Ovary (tissue), 10 donors: ENCODE measurements at regions of chr15 and their contacts with region 1.

Region 1: GRCh38 chr15:68442041-68442440 is 10.1 kb upstream of the ITGA11 start:
- DNase-seq: peak in 2 of 5 donors; percentile 36 to 52
- H3K4me3 ChIP-seq: no peak overlapping the region
- H3K27ac ChIP-seq: no peak overlapping the region
- H3K4me1 ChIP-seq: peaks cover 6% of the 10 kb centered on the region
- H3K27me3 ChIP-seq: no peaks in the 10 kb centered on the region
- CTCF ChIP-seq: no peak
- EP300 ChIP-seq: no peak
- POLR2A ChIP-seq: no peak

Region 2: GRCh38 chr15:68126396-68126795 is 315.6 kb before region 1 on chr15:
- intact Hi-C with region 1: no loop called
- DNase-seq: peak in 2 of 5 donors; percentile 42 to 49
- H3K4me3 ChIP-seq: no peak overlapping the region
- H3K27ac ChIP-seq: no peak overlapping the region
- H3K4me1 ChIP-seq: peaks cover 4% of the 10 kb centered on the region
- H3K27me3 ChIP-seq: no peaks in the 10 kb centered on the region
- CTCF ChIP-seq: no peak
- EP300 ChIP-seq: no peak
- POLR2A ChIP-seq: no peak

Region 3: GRCh38 chr15:68464448-68465090 is 22.5 kb after region 1 on chr15:
- intact Hi-C with region 1: loop called in 1 of 4 experiments (anchors 1 kb)
- DNase-seq: no peak
- H3K4me3 ChIP-seq: no peak overlapping the region
- H3K27ac ChIP-seq: no peak overlapping the region
- H3K4me1 ChIP-seq: no peaks in the 10 kb centered on the region
- H3K27me3 ChIP-seq: no peaks in the 10 kb centered on the region
- CTCF ChIP-seq: no peak
- EP300 ChIP-seq: no peak
- POLR2A ChIP-seq: no peak